OCI-LY7 (cell line): ENCODE measurements at regions of chr10 and their contacts with region 1.

Region 1: GRCh38 chr10:5698062-5698461 is 13.4 kb downstream of the TASOR2 start:
- DNase-seq: no peak
- H3K4me3 ChIP-seq: no peak overlapping the region
- H3K27ac ChIP-seq: peak overlapping the region; percentile 14
- H3K4me1 ChIP-seq: peaks cover 99% of the 10 kb centered on the region
- CTCF ChIP-seq: no peak

Region 2: DNA sequence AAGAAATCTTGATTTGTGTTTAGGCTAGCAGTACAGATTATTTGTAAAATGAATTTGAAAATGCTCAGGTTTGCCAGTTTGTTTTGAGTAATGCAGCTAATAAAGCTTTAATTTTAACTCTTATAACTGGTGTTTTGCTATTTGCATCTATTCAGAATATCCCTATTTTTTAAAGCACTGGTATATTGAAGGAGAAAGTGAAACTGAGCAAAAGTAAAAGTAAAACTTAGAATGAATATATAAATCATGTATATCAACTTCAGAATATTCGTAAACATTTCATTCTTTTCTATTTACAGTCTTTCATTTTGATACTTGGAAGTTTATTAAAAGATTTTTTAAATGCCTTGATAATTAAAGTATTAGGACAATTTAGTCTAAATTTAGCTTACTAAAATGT is 12.8 kb after region 1 on chr10:
- CTCF ChIA-PET with region 1: interaction called, 4 read pairs
- POLR2A ChIA-PET with region 1: interaction called, 45 read pairs
- intact Hi-C with region 1: no loop called
- DNase-seq: no peak
- H3K4me3 ChIP-seq: no peak overlapping the region
- H3K27ac ChIP-seq: no peak overlapping the region
- H3K4me1 ChIP-seq: peaks cover 80% of the 10 kb centered on the region
- CTCF ChIP-seq: no peak